ENCODE measurements at regions of chr12 and their contacts with region 1.

Region 1: GRCh38 chr12:101368016-101368415 is 39.6 kb downstream of the ARL1 start:
- DNase-seq: no peak
- H3K4me3 ChIP-seq: no peak overlapping the region
- H3K27ac ChIP-seq: no peak overlapping the region
- H3K4me1 ChIP-seq: no peaks in the 10 kb centered on the region
- H3K27me3 ChIP-seq: no peaks in the 10 kb centered on the region
- CTCF ChIP-seq: no peak
- EP300 ChIP-seq: no peak
- POLR2A ChIP-seq: no peak

Region 2: GRCh38 chr12:101343893-101344292 is 24.1 kb before region 1 on chr12:
- intact Hi-C with region 1: loop called in 1 of 4 experiments (anchors 2 kb)
- DNase-seq: no peak
- H3K4me3 ChIP-seq: no peak overlapping the region
- H3K27ac ChIP-seq: no peak overlapping the region
- H3K4me1 ChIP-seq: no peaks in the 10 kb centered on the region
- H3K27me3 ChIP-seq: no peaks in the 10 kb centered on the region
- CTCF ChIP-seq: no peak
- EP300 ChIP-seq: no peak
- POLR2A ChIP-seq: no peak

Region 3: DNA sequence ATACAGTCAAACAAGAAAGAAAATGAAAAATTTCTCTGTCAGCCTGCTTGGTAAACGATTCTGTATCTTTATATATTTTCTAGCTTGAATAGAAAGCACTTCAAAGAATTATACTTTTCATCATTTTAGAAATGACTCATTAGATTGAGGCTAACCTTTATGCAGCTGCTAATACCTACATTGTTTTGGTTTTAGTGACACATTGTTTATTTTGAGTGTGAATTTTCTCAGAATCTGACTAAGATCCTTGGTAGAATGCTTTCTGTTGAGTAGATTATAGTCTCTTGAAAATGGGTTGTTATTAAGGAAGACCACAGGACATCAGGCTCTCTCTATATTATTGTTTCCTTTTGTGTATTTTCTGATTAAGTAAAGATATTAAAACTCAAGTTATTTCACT is 829.8 kb after region 1 on chr12 and contains the start of gene PMCH:
- intact Hi-C with region 1: no loop called
- DNase-seq: no peak
- H3K4me3 ChIP-seq: no peak within 1 kb of the TSS
- H3K27ac ChIP-seq: no peak within 1 kb of the TSS
- H3K4me1 ChIP-seq: no peaks in the 10 kb centered on the region
- H3K27me3 ChIP-seq: no peaks in the 10 kb centered on the region
- CTCF ChIP-seq: no peak
- EP300 ChIP-seq: no peak
- POLR2A ChIP-seq: no peak
- total RNA-seq, gene PMCH: not detected

Measured in ovary (tissue), 10 donors.